ENCODE measurements at regions of chr12 and their contacts with region 1.

Region 1: DNA sequence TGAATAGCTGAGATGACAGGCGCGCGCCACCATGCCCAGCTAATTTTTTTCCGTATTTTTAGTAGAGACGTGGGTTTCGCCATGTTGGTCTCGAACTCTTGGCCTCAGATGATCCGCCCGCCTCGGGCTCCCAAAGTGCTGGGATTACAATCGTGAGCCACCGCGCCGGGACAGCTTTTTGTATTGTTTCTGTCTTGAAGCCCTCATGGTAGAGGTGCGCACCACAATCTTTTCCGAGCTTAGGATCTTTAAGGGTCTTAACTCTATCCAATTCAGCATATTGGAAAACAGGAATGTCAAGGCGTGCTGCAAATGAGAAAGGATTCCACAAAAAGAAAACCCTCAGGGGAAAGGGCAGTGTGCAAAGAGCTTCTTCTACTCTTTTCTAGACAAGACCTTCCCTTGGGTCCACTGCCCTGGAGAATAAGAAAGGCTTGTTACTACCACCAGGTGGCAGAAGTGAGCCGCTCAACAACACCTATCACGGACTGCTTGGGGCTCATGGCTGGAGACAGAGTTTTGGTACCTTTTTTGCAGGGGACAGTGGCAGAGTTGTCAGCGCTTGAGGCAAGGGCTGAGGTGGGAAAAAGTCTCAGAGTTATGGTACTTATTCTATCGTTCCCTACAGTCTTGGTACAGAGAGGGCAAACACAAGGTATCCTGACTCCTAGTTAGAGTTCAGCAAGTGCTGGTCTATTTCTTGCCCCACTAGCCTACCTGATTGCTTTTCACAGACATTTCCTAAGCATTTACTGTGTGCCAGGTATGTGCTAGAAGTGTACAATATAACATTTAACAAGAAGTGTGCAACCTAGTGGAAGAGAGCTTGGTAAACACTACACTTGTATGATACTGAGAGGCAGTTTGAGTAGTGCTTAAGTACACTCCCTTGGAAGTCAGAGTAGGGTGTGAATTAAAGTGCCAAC is 16.4 kb upstream of the SP7 start:
- DNase-seq: peak; percentile 91
- ATAC-seq: peak; percentile 100
- H3K4me3 Mint-ChIP-seq: no peak overlapping the region
- H3K27ac Mint-ChIP-seq: peak overlapping the region; percentile 56
- H3K4me1 Mint-ChIP-seq: peaks cover 8% of the 10 kb centered on the region
- H3K27me3 Mint-ChIP-seq: no peaks in the 10 kb centered on the region

Region 2: GRCh38 chr12:53365245-53365904 is 12.8 kb after region 1 on chr12:
- CTCF ChIA-PET with region 1: interaction called, 11 read pairs
- POLR2A ChIA-PET with region 1: interaction called, 3 read pairs
- intact Hi-C with region 1: no loop called
- DNase-seq: no peak
- ATAC-seq: peak; percentile 82
- H3K4me3 Mint-ChIP-seq: no peak overlapping the region
- H3K27ac Mint-ChIP-seq: peak overlapping the region; percentile 81
- H3K4me1 Mint-ChIP-seq: peaks cover 15% of the 10 kb centered on the region
- H3K27me3 Mint-ChIP-seq: no peaks in the 10 kb centered on the region

Region 3: DNA sequence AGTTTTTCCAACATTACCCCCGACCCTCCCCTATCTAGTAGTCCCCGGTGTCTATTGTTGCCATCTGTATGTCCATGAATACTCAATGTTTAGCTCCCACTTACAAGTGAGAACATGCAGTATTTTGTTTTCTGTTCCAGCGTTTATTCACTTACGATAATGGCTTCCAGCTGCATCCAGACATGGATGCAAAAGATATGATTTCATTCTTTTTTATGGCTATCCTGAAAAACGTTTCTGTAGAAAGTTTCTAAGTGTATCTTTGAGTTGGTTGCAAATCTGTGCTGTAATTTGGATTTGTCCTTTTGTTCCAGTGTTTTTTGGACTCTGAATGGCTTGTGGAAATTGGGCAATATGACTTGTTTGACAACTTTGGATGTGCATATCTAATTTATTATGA is 39.1 kb after region 1 on chr12:
- CTCF ChIA-PET with region 1: interaction called, 11 read pairs
- POLR2A ChIA-PET with region 1: interaction called, 4 read pairs
- intact Hi-C with region 1: no loop called
- DNase-seq: no peak
- ATAC-seq: no peak
- H3K4me3 Mint-ChIP-seq: no peak overlapping the region
- H3K27ac Mint-ChIP-seq: no peak overlapping the region
- H3K4me1 Mint-ChIP-seq: peaks cover 48% of the 10 kb centered on the region
- H3K27me3 Mint-ChIP-seq: no peaks in the 10 kb centered on the region

Region 4: GRCh38 chr12:53414756-53415417 is 62.3 kb after region 1 on chr12:
- CTCF ChIA-PET with region 1: interaction called, 117 read pairs
- POLR2A ChIA-PET with region 1: interaction called, 3 read pairs
- intact Hi-C with region 1: no loop called
- DNase-seq: no peak
- ATAC-seq: no peak
- H3K4me3 Mint-ChIP-seq: no peak overlapping the region
- H3K27ac Mint-ChIP-seq: no peak overlapping the region
- H3K4me1 Mint-ChIP-seq: peaks cover 66% of the 10 kb centered on the region
- H3K27me3 Mint-ChIP-seq: no peaks in the 10 kb centered on the region

Region 5: DNA sequence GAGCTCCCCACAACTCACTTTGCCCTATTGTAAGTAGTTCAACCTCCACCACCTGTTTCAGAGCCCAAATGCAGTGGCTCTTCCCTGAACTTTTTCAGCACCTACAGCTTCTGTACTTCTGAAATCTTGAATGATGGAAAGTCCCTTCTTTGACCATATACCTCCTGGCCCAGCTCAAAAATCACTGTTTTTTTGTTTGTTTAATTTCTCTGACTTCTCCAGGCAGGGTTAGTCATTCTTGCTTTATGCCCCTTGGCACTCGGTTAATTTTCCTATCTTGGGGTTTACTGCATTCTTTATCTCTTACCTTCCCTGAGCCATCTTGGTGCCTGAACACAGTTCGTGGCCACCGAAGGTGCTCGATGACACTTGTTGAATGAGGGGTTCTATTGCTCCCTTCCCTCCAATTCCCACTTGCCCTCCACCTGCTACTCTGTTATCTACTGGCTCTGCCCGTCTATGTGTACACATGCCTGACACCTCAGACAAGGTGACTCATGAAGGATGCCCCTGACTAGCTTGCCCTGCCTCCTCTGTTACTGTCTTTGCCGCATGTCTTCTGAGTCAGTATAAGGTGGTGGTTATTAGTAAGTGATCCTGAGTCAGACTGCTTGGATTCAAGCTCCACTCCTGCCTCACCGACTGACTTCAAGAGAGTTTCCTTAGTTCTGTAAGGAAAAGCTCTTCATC is 75.5 kb after region 1 on chr12:
- CTCF ChIA-PET with region 1: interaction called, 117 read pairs
- POLR2A ChIA-PET with region 1: interaction called, 7 read pairs
- intact Hi-C with region 1: no loop called
- DNase-seq: peak; percentile 70
- ATAC-seq: peak; percentile 100
- H3K4me3 Mint-ChIP-seq: no peak overlapping the region
- H3K27ac Mint-ChIP-seq: peak overlapping the region; percentile 5
- H3K4me1 Mint-ChIP-seq: peaks cover 14% of the 10 kb centered on the region
- H3K27me3 Mint-ChIP-seq: no peaks in the 10 kb centered on the region

Region 6: GRCh38 chr12:53492830-53493611 is 140.4 kb after region 1 on chr12:
- CTCF ChIA-PET with region 1: interaction called, 11 read pairs
- POLR2A ChIA-PET with region 1: no interaction called
- intact Hi-C with region 1: no loop called
- DNase-seq: peak; percentile 93
- ATAC-seq: peak; percentile 94
- H3K4me3 Mint-ChIP-seq: peak overlapping the region; percentile 80
- H3K27ac Mint-ChIP-seq: peak overlapping the region; percentile 88
- H3K4me1 Mint-ChIP-seq: peaks cover 20% of the 10 kb centered on the region
- H3K27me3 Mint-ChIP-seq: no peaks in the 10 kb centered on the region

Region 7: DNA sequence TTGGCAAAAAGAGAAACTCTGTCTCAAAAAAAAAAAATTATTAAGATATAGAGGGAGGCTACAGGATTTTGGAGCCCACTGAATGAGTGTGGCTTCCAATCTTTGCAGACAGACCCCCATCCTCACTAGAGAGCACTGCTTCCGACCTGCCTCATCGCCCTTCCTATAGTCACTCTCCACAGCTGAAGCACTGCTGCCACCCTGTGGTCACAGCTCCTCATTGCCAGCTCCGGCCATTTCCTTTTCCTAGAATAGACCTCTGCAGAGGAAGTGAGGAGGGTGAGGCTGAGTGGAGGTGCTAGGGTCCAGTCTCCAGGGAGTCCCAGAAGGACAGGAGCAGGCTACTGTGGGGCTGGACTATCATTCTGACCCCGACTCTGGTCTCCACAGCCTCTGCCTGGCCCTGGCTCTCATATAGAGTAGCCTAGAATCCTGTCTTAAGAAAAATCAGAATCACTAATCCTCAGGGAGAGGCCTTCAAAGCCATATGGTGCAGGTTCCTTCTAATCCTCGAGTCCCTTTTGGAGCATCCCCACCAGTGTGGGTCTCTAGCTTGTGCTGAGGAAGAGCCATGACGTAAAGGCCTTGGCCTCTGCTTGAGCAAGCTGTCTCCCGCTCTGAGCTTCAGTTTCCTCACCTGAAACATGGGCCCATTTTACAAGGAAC is 156.1 kb after region 1 on chr12:
- CTCF ChIA-PET with region 1: interaction called, 44 read pairs
- POLR2A ChIA-PET with region 1: no interaction called
- intact Hi-C with region 1: loop called (anchors 1 kb)
- DNase-seq: peak; percentile 92
- ATAC-seq: peak; percentile 99
- H3K4me3 Mint-ChIP-seq: no peak overlapping the region
- H3K27ac Mint-ChIP-seq: peak overlapping the region; percentile 47
- H3K4me1 Mint-ChIP-seq: peaks cover 7% of the 10 kb centered on the region
- H3K27me3 Mint-ChIP-seq: no peaks in the 10 kb centered on the region